GM10248 (cell line): ENCODE measurements at regions of chr17 and their contacts with region 1.

Region 1: GRCh38 chr17:3907483-3908216 is 8.6 kb downstream of the P2RX1 start:
- DNase-seq: no peak
- CTCF ChIP-seq: peak; percentile 64

Region 2: GRCh38 chr17:3893003-3893719 is 14.5 kb before region 1 on chr17 and contains the start of gene CAMKK1:
- CTCF ChIA-PET with region 1: interaction called, 31 read pairs
- POLR2A ChIA-PET with region 1: interaction called, 3 read pairs
- DNase-seq: peak; percentile 99
- CTCF ChIP-seq: no peak

Region 3: DNA sequence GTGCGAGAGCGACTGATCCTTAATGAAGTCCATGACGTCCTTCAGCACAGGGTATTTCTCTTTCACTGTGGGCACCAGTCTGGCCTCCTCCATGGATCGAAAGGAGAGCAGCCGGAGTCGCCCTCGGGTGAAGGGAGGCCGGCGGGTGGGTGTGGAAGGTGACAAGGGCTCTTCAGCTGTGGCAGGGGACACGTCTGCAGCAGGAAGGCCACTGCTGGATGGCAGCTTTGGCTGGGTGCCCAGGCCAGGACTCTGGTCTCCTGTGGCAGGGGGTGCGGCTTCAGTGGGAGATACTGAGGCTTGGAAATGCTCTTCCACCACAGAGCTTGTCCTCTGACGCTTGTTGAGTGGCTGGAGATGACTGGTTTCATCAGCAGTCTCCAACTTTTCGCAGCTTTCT is 156.7 kb after region 1 on chr17:
- CTCF ChIA-PET with region 1: no interaction called
- POLR2A ChIA-PET with region 1: no interaction called
- DNase-seq: no peak
- CTCF ChIP-seq: no peak